A549 (cell line): ENCODE measurements at regions of chr12 and their contacts with region 1.

Region 1: DNA sequence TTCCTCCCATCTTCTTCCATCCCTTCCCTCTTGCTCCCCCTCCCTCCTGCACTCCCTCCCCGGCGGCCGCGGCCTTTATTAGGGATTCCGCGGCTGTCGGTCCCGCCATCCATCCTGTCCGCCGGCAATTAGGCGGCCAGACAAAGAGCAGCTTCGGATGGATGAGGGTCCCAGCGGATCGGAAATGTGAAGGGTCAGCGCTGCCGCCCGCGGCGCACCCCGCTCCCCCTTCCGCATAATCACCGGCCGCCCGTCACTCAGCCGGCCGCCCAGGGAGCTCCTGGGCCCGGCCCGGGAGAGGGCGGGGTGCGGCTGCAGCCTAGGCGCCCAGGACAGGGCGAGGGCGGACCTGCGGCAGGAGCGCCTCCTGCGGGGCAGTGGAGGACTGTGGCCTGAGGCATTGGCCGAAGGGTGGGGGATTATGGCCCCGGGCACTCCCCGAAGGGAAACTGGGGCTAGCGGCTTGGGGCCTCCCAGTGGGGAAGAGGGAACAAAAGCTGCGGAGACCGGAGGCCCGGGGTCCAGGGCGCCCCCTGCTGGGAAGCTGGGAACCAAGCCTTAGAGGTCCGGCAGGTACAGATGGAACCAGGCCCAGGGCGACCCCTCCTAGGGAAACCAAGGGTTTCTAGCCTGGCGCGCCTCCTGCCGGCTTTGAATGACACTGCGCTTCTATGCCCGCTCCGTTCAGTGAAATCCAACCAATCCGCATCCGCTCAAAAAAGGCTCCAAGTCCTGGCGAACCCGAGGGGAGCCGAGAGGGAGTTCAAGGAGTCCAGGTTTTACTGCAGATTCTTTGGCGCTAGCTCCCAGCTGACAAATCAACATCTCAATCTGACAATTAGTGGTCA is 4.4 kb upstream of the DNAJC22 start:
- DNase-seq: peak; percentile 88 to 95
- ATAC-seq: peak; percentile 60 to 83
- H3K4me3 ChIP-seq: peak overlapping the region; percentile 48
- H3K27ac ChIP-seq: peak overlapping the region; percentile 72 to 86
- H3K4me1 ChIP-seq: peaks cover 41% of the 10 kb centered on the region
- CTCF ChIP-seq: peak; percentile 98
- EP300 ChIP-seq: no peak
- POLR2A ChIP-seq: no peak
- RAD21 ChIP-seq: peak; percentile 54 to 66

Region 2: GRCh38 chr12:49206389-49206788 is 135.9 kb before region 1 on chr12:
- CTCF ChIA-PET with region 1: no interaction called
- POLR2A ChIA-PET with region 1: no interaction called
- DNase-seq: no peak
- ATAC-seq: no peak
- H3K4me3 ChIP-seq: no peak overlapping the region
- H3K27ac ChIP-seq: no peak overlapping the region
- H3K4me1 ChIP-seq: peaks cover 8% of the 10 kb centered on the region
- CTCF ChIP-seq: no peak
- EP300 ChIP-seq: no peak
- POLR2A ChIP-seq: no peak
- RAD21 ChIP-seq: no peak

Region 3: DNA sequence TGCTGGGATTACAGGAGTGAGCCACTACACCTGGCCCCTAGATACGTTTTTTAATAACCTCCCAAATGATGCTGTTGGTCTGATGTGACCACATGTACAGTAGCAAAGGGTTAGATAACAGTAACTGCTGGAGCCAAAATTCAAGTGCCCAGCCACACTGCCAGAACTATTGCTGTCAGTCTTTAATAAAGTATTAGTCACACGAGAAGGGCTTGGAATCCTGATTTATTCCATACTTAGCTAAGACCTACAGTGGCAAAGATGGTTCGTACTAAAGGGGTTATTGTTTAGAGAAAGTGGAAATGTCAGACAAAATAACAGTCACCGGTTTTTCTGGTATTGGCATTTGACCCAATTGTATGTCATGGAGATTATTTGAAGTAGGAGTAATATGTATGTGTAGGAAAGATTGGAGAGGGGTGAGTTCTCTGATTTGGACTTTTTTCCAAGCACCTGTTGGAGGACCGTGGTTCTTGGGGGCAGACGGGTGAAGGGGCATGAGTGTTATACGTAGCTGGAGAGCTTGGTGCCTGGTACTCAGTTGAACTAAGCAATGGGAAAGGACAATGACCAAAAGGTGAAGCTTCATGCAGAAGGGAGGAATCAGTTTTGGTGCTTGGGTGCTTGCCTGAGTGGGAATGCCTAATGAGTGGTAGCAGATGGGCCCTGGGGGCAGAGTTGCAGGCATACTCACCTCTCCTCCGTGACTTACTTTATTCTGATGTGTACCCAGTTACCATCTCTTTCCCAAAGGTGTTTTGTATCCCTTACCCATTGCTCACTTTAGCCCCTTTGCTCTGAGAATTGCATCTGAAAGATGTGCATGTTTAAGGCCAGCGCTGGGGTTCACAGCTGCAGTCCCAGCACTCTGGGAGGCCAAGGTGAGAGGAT is 67.6 kb before region 1 on chr12:
- CTCF ChIA-PET with region 1: interaction called, 12 read pairs
- POLR2A ChIA-PET with region 1: no interaction called
- DNase-seq: no peak
- ATAC-seq: peak; percentile 15 to 20
- H3K4me3 ChIP-seq: no peak overlapping the region
- H3K27ac ChIP-seq: no peak overlapping the region
- H3K4me1 ChIP-seq: peaks cover 14% of the 10 kb centered on the region
- CTCF ChIP-seq: no peak
- EP300 ChIP-seq: no peak
- POLR2A ChIP-seq: no peak
- RAD21 ChIP-seq: no peak

Region 4: GRCh38 chr12:49304161-49304560 is 38.1 kb before region 1 on chr12:
- CTCF ChIA-PET with region 1: interaction called, 18 read pairs
- POLR2A ChIA-PET with region 1: no interaction called
- DNase-seq: no peak
- ATAC-seq: peak in 1 of 2 experiments; percentile 37; a peak in 2 of 6 replicates
- H3K4me3 ChIP-seq: no peak overlapping the region
- H3K27ac ChIP-seq: no peak overlapping the region
- H3K4me1 ChIP-seq: no peaks in the 10 kb centered on the region
- CTCF ChIP-seq: no peak
- EP300 ChIP-seq: no peak
- POLR2A ChIP-seq: no peak
- RAD21 ChIP-seq: no peak

Region 5: DNA sequence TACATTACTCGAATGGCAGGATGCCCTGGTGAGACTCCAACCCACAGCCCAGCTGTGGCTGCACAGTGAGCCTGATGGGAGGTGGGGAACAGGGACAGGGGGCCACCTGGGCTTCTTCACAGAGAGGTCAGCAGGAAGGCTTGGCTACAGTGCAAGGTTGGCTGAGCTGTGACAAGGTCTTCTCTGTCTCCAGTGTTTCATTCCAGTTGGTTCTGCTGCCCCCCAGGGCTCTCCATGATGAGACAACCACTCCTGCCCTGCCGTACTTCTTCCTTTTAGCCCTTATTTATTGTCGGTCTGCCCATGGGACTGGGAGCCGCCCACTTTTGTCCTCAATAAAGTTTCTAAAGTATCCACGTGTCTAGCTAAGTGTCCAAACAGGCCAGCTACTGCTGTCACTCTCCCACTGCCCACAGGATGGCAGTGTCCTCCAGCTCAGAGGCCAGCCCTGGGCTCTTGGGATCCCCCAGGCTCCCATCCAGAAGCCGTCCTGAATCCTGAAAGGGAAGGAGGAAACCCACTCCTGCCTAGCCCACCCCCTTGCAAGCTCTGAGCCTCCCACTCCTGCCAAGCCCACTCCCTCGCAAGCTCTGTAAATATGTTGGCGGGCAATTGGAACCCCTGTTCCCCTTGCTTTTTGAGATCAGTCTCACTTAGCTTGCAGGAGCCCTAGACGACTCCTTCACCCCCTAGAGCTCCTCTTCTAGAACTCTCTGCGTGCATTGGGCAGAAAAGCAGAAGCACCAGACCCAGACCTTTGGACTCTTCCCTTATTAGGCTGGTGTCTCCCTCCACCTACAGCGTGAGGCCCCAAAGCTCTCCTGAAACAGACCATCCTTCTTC is 10.7 kb before region 1 on chr12:
- CTCF ChIA-PET with region 1: interaction called, 144 read pairs
- POLR2A ChIA-PET with region 1: interaction called, 4 read pairs
- DNase-seq: peak; percentile 83 to 90
- ATAC-seq: peak; percentile 88 to 93
- H3K4me3 ChIP-seq: no peak overlapping the region
- H3K27ac ChIP-seq: peak overlapping the region in 1 of 2 experiments; percentile 28; a peak in 1 of 6 replicates
- H3K4me1 ChIP-seq: peaks cover 6% of the 10 kb centered on the region; the same call in 2 of the 3 replicates
- CTCF ChIP-seq: peak; percentile 82
- EP300 ChIP-seq: no peak
- POLR2A ChIP-seq: no peak
- RAD21 ChIP-seq: peak; percentile 85 to 86

Region 6: DNA sequence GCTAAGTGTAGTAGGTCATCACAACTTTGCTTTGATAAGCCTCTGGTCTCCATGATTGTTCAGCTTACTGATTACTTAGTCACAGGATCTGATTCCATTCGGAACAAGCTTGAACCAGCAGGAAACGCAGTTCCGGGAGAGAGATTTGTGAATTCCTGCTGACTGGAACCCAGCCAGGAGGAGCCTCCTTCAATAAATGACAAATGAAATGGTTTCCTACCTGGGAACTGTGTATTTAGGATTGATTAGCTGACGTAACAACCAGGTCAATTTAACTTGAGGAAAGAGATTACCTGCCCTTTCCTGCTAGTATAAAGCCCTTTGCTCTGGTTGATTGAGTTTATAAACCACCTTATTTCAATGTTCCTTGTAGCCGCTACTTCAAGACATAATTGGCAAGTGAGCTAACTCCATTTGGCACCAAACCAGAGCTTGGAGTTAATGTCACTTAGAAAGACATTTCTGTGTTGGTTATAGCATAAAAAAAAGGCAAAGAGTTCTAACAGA is 161.4 kb after region 1 on chr12:
- CTCF ChIA-PET with region 1: interaction called, 201 read pairs
- POLR2A ChIA-PET with region 1: no interaction called
- DNase-seq: peak; percentile 44 to 88
- ATAC-seq: peak in 1 of 2 experiments; percentile 66; a peak in 3 of 6 replicates
- H3K4me3 ChIP-seq: peak overlapping the region; percentile 25; the same call in 2 of the 3 replicates
- H3K27ac ChIP-seq: peak overlapping the region; percentile 78 to 84
- H3K4me1 ChIP-seq: peaks cover 60% of the 10 kb centered on the region
- CTCF ChIP-seq: no peak
- EP300 ChIP-seq: peak in 1 of 2 experiments; percentile 68; a peak in 1 of 5 replicates
- POLR2A ChIP-seq: no peak
- RAD21 ChIP-seq: no peak

Region 7: GRCh38 chr12:49527361-49528130 is 185.3 kb after region 1 on chr12:
- CTCF ChIA-PET with region 1: interaction called, 41 read pairs
- POLR2A ChIA-PET with region 1: no interaction called
- DNase-seq: no peak
- ATAC-seq: no peak
- H3K4me3 ChIP-seq: no peak overlapping the region
- H3K27ac ChIP-seq: no peak overlapping the region
- H3K4me1 ChIP-seq: no peaks in the 10 kb centered on the region
- CTCF ChIP-seq: no peak
- EP300 ChIP-seq: no peak
- POLR2A ChIP-seq: peak; percentile 21; the same call in 1 of the 2 replicates
- RAD21 ChIP-seq: no peak

Region 8: GRCh38 chr12:49553512-49554088 is 211.3 kb after region 1 on chr12:
- CTCF ChIA-PET with region 1: interaction called, 30 read pairs
- POLR2A ChIA-PET with region 1: interaction called, 3 read pairs
- DNase-seq: peak; percentile 68 to 71
- ATAC-seq: peak; percentile 58 to 75
- H3K4me3 ChIP-seq: no peak overlapping the region
- H3K27ac ChIP-seq: no peak overlapping the region
- H3K4me1 ChIP-seq: no peaks in the 10 kb centered on the region
- CTCF ChIP-seq: peak; percentile 72
- EP300 ChIP-seq: no peak
- POLR2A ChIP-seq: no peak
- RAD21 ChIP-seq: peak; percentile 72 to 87